HepG2 (cell line): ENCODE measurements at regions of chr4 and their contacts with region 1.

Region 1: DNA sequence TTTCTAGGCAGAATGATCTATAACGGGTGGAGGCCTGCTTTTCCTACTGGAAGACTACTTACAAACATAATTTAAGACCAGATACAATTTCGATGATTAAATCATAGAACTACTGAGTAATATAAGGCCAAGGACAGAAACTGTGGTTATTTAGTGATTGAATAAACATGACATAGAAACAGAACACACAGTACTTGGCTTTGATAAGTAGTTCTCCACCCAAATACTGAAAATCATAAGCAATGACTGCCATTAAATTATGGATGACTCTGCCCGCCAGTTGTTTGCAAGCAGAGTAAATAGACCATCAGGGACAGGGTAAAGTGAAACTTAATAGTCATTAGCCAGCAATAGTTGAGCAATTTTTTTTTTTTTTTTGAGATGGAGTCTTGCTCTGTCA is 17.2 kb upstream of the SMIM14 start:
- DNase-seq: peak; percentile 17
- ATAC-seq: no peak
- H3K4me3 ChIP-seq: no peak overlapping the region
- H3K27ac ChIP-seq: no peak overlapping the region
- H3K4me1 ChIP-seq: peaks cover 15% of the 10 kb centered on the region
- H3K27me3 ChIP-seq: no peaks in the 10 kb centered on the region
- CTCF ChIP-seq: no peak
- EP300 ChIP-seq: no peak
- POLR2A ChIP-seq: no peak
- RAD21 ChIP-seq: no peak

Region 2: GRCh38 chr4:39631700-39632079 is 24.2 kb before region 1 on chr4:
- CTCF ChIA-PET with region 1: no interaction called
- POLR2A ChIA-PET with region 1: interaction called, 3 read pairs
- in situ Hi-C with region 1: no loop called
- intact Hi-C with region 1: loop called (anchors 1 kb)
- DNase-seq: no peak
- ATAC-seq: no peak
- H3K4me3 ChIP-seq: no peak overlapping the region
- H3K27ac ChIP-seq: no peak overlapping the region
- H3K4me1 ChIP-seq: peaks cover 43% of the 10 kb centered on the region
- H3K27me3 ChIP-seq: no peaks in the 10 kb centered on the region
- CTCF ChIP-seq: no peak
- EP300 ChIP-seq: no peak
- POLR2A ChIP-seq: no peak
- RAD21 ChIP-seq: no peak